ENCODE measurements at regions of chr2 and their contacts with region 1.

Region 1: DNA sequence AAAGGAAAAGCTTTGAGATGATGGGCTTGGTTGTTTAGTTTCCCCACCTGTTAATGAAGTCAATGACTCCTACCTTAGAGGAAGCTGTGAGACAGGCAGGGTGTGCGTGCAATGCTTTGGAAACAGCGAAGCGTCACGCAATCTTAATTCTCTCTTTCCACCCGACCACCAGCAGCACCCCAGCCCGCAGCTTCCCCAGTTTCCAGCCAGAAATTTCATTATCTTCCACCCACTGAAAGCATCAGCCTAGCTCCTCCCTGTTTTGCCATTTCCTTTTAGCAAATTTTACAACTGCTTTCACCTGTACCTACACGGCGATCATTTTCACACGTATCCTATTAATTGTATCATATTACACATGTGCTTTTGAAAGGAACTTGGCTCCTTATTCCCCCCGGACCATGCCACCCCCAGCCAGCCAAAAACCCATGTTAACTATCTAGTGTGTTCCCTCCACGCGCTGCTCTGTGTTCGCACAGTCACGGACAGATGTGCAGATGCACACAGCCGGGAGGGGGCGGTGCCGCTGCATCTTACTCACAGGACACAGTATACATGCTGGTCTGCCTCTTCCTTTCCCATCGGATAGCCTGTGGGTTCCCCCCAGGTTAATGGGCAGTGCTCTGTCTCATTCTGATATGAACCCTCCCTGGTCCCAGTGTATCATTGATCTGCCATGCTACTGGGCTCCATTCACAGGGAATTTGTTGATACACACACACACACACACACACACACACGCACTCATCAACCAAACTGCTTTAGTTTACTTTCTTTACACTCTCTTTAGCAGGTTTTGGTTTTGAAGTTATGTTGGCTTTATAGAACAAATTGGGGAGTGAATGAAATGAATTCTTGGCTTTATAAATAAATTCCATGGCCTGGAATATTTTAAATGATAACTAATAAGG is 22.4 kb downstream of the CYP27C1 start:
- DNase-seq: peak; percentile 77
- H3K4me3 Mint-ChIP-seq: peak overlapping the region; percentile 9
- H3K27ac Mint-ChIP-seq: no peak overlapping the region
- H3K4me1 Mint-ChIP-seq: peaks cover 6% of the 10 kb centered on the region
- H3K27me3 Mint-ChIP-seq: no peaks in the 10 kb centered on the region
- CTCF ChIP-seq: peak; percentile 77

Region 2: DNA sequence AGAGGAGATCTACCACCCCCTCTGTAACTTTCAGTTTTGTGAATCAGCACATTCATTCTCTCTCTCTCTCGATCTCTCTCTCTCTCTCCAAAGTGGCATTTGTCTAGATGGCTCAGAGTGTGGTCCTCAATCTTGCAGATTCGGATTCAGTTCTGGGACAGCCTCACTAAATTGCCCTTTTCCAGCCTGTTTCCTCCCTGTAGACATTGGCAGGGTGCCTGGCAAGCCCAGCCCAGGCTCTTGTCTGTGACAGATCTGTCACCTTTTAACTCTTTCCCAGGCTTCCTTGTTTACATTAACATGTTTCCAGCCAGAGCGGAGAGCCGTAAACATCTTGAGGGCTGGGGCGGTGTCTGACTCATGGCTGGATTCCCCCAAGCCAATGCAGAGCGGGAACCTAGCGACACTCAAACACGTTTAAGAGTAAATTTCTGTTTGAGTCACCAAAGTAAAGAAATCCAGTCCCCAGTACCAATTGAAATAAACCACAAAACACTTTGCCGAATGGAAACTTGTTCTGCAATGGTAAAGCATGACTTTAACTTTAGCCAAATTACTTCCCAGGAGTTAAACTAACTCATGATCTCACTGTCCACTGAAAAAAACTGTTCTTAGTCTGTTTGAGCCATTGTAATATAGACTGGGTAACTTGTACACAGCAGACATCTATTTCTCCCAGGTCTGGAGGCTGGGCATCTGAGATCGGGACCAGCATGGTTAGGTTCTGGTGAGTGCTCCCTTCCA is 29.0 kb after region 1 on chr2:
- CTCF ChIA-PET with region 1: no interaction called
- POLR2A ChIA-PET with region 1: no interaction called
- intact Hi-C with region 1: no loop called
- DNase-seq: peak; percentile 90
- H3K4me3 Mint-ChIP-seq: no peak overlapping the region
- H3K27ac Mint-ChIP-seq: no peak overlapping the region
- H3K4me1 Mint-ChIP-seq: peaks cover 6% of the 10 kb centered on the region
- H3K27me3 Mint-ChIP-seq: no peaks in the 10 kb centered on the region
- CTCF ChIP-seq: no peak

Region 3: GRCh38 chr2:127305990-127306585 is 108.4 kb after region 1 on chr2:
- CTCF ChIA-PET with region 1: no interaction called
- POLR2A ChIA-PET with region 1: no interaction called
- intact Hi-C with region 1: loop called (anchors 5 kb)
- DNase-seq: peak; percentile 86
- H3K4me3 Mint-ChIP-seq: no peak overlapping the region
- H3K27ac Mint-ChIP-seq: no peak overlapping the region
- H3K4me1 Mint-ChIP-seq: peaks cover 5% of the 10 kb centered on the region
- H3K27me3 Mint-ChIP-seq: no peaks in the 10 kb centered on the region
- CTCF ChIP-seq: no peak

Measured in MCF 10A (cell line).